PC-3 (cell line): ENCODE measurements at regions of chr9 and their contacts with region 1.

Region 1: DNA sequence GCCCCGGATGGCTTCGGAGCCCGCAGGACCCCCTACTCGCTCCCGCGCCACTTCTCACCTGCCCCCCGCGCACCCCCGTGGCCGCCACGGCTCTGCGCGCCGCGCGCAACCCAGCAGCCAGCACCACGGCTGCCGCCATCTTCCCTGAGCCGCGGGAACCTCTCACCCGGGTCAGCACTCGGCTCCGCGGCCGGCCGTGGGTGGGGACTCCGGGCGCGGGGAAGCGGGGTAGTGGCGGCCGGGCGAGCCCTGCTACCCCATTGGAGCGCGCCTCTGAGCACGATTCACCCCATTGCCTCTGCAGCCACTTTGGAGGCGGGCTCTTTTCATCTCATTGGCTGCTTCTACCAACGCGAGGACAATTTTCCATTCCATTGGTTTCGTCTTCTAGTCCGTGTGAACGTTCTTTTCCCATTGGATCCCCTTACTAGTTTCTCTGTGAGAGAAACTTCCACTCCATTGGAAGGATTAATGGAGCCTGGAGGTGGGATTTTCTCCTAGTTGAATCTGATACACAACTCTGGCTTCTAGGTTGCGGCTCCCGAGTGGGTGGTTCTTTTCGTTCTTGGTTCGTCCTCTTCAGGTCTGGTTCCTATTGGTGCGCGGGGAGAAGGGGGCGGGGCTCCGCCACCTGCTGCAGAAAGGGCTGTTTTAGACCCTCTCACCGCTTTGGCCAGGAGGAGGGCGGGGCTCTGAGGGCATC is at the start of gene HINT2:
- DNase-seq: peak; percentile 94
- ATAC-seq: peak; percentile 89
- H3K4me3 ChIP-seq: peak within 1 kb of the TSS; percentile 86
- H3K27ac ChIP-seq: peak within 1 kb of the TSS; percentile 81
- H3K4me1 ChIP-seq: peaks cover 16% of the 10 kb centered on the region
- H3K27me3 ChIP-seq: no peaks in the 10 kb centered on the region
- CTCF ChIP-seq: no peak
- total RNA-seq, gene HINT2: 69.7 and 78.5 TPM in 2 replicates

Region 2: GRCh38 chr9:35795695-35796094 is 19.3 kb before region 1 on chr9:
- CTCF ChIA-PET with region 1: interaction called, 6 read pairs
- POLR2A ChIA-PET with region 1: no interaction called
- intact Hi-C with region 1: loop called (anchors 1 kb)
- DNase-seq: peak; percentile 67
- ATAC-seq: peak; percentile 77
- H3K4me3 ChIP-seq: no peak overlapping the region
- H3K27ac ChIP-seq: peak overlapping the region; percentile 60
- H3K4me1 ChIP-seq: peaks cover 41% of the 10 kb centered on the region
- H3K27me3 ChIP-seq: no peaks in the 10 kb centered on the region
- CTCF ChIP-seq: no peak